K562 (cell line): ENCODE measurements at regions of chr19 and their contacts with region 1.

Region 1: GRCh38 chr19:17075035-17075863 is at the starts of genes HAUS8 and MYO9B:
- DNase-seq: peak; percentile 96 to 100 (median 98)
- ATAC-seq: peak; percentile 90
- H3K4me3 ChIP-seq: peak within 1 kb of the TSS; percentile 78
- H3K27ac ChIP-seq: peak within 1 kb of the TSS; percentile 92
- H3K4me1 ChIP-seq: peaks cover 28 to 58% of the 10 kb centered on the region in 2 experiments; a peak in 4 of 5 replicates
- H3K27me3 ChIP-seq: no peaks in the 10 kb centered on the region; a peak in 1 of 5 replicates
- CTCF ChIP-seq: 0 out of 6 replicates have a peak, but pooled peaks of 1 of the 3 experiments have one; percentile 2
- EP300 ChIP-seq: peak; percentile 7; the same call in 1 of the 2 replicates
- POLR2A ChIP-seq: peak; percentile 98
- RAD21 ChIP-seq: no peak
- polyA plus RNA-seq, gene HAUS8: 34.5 to 53.2 TPM
- polyA plus RNA-seq, gene MYO9B: 2.4 to 3.0 TPM

Region 2: DNA sequence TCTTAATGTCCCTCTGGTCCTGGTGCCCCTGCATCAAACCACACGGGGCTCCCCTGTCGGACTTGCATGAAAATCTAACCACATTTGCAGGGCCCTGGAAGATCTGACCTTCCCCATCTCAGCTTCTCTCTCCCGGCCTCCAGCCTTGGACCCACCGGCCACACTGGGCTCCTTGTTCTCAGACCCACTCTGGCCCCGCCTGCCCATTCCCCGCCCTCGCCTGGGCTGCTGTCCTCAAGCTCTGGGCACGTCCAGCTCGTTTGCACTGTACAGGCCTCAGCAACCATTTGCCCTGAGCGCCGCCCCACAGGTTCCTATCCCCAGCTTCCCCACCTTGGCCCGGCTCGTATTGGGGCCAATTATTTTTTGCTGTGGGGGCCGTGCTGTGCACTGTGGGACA is 10.9 kb after region 1 on chr19:
- CTCF ChIA-PET with region 1: no interaction called
- POLR2A ChIA-PET with region 1: interaction called, 13 read pairs
- in situ Hi-C with region 1: no loop called
- intact Hi-C with region 1: no loop called
- DNase-seq: no peak
- ATAC-seq: no peak
- H3K4me3 ChIP-seq: no peak overlapping the region
- H3K27ac ChIP-seq: no peak overlapping the region
- H3K4me1 ChIP-seq: peaks cover 8 to 14% of the 10 kb centered on the region in 2 experiments; a peak in 4 of 5 replicates
- H3K27me3 ChIP-seq: no peaks in the 10 kb centered on the region
- CTCF ChIP-seq: no peak
- EP300 ChIP-seq: no peak
- POLR2A ChIP-seq: no peak
- RAD21 ChIP-seq: no peak